Psoas muscle (tissue), 8 donors: ENCODE measurements at regions of chr2 and their contacts with region 1.

Region 1: GRCh38 chr2:197378494-197379307 is 56.1 kb downstream of the SF3B1 start:
- DNase-seq: peak in 1 of 2 donors; percentile 51
- ATAC-seq: peak; percentile 69 to 93 (median 78)
- H3K4me3 ChIP-seq: no peak overlapping the region
- H3K27ac ChIP-seq: no peak overlapping the region
- H3K4me1 ChIP-seq: no peaks in the 10 kb centered on the region
- H3K27me3 ChIP-seq: no peaks in the 10 kb centered on the region
- CTCF ChIP-seq: peak; percentile 78

Region 2: GRCh38 chr2:197011799-197012641 is 366.7 kb before region 1 on chr2:
- intact Hi-C with region 1: loop called (anchors 5 kb)
- DNase-seq: no peak
- ATAC-seq: peak; percentile 49 to 78 (median 68)
- H3K4me3 ChIP-seq: no peak overlapping the region
- H3K27ac ChIP-seq: no peak overlapping the region
- H3K4me1 ChIP-seq: no peaks in the 10 kb centered on the region
- H3K27me3 ChIP-seq: no peaks in the 10 kb centered on the region
- CTCF ChIP-seq: peak; percentile 83

Region 3: GRCh38 chr2:197113275-197113711 is 265.4 kb before region 1 on chr2:
- intact Hi-C with region 1: loop called (anchors 2 kb)
- DNase-seq: no peak
- ATAC-seq: peak in 3 of 4 donors; percentile 36 to 74 (median 59)
- H3K4me3 ChIP-seq: no peak overlapping the region
- H3K27ac ChIP-seq: no peak overlapping the region
- H3K4me1 ChIP-seq: no peaks in the 10 kb centered on the region
- H3K27me3 ChIP-seq: no peaks in the 10 kb centered on the region
- CTCF ChIP-seq: peak; percentile 72

Region 4: GRCh38 chr2:197191177-197191939 is 187.3 kb before region 1 on chr2:
- intact Hi-C with region 1: loop called (anchors 1 to 5 kb)
- DNase-seq: no peak
- ATAC-seq: peak in 1 of 4 donors; percentile 67
- H3K4me3 ChIP-seq: no peak overlapping the region
- H3K27ac ChIP-seq: no peak overlapping the region
- H3K4me1 ChIP-seq: peaks cover 7% of the 10 kb centered on the region
- H3K27me3 ChIP-seq: no peaks in the 10 kb centered on the region
- CTCF ChIP-seq: peak; percentile 77

Region 5: DNA sequence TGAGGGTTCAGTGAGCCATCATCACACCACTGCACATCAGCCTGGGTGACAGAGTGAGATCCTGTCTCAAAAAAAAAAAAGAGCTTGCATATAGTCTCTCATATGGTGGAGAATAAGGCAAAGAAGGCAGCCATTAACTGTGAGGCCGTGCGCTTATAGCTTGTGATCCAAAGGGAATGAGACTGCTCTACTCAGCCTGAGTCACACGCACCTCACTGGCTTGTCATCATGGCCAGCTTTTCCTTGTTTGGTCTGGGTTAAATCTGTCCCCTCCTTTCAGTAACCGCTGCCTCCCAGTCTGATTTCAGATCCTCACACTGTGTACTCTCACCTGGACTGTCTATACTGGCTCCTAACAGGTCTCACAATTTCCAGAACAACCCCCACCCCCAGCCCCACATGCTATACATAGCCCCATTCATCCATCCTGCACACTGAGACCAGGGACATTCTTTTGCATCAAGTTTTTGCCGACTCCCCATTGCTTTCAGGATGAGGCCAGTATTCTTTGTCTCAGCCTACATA is 32.8 kb before region 1 on chr2:
- intact Hi-C with region 1: no loop called
- DNase-seq: no peak
- ATAC-seq: peak in 3 of 4 donors; percentile 39 to 73 (median 65)
- H3K4me3 ChIP-seq: no peak overlapping the region
- H3K27ac ChIP-seq: no peak overlapping the region
- H3K4me1 ChIP-seq: no peaks in the 10 kb centered on the region
- H3K27me3 ChIP-seq: no peaks in the 10 kb centered on the region
- CTCF ChIP-seq: no peak

Region 6: DNA sequence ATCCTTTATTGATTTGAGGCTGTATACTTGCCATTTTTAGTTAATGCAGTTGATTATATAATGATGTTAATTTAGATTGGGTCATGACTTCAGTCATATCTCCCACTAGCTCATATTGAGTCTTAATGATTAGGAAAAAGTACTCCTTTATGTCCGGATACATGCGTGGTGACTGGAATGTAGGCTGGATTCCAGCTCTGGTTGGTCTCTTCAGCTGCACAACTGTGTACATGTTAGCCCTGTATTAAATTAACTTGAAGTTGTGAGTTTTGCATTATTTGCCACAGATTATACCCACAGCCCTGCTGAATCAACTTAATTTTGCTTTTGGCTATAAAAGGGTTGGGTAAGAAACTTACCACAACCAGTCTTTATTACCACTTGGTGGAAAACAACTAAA is 159.7 kb after region 1 on chr2:
- intact Hi-C with region 1: no loop called
- DNase-seq: no peak
- ATAC-seq: no peak
- H3K4me3 ChIP-seq: no peak overlapping the region
- H3K27ac ChIP-seq: no peak overlapping the region
- H3K4me1 ChIP-seq: peaks cover 5% of the 10 kb centered on the region
- H3K27me3 ChIP-seq: no peaks in the 10 kb centered on the region
- CTCF ChIP-seq: no peak